OCI-LY7 (cell line): ENCODE measurements at regions of chr19 and their contacts with region 1.

Region 1: DNA sequence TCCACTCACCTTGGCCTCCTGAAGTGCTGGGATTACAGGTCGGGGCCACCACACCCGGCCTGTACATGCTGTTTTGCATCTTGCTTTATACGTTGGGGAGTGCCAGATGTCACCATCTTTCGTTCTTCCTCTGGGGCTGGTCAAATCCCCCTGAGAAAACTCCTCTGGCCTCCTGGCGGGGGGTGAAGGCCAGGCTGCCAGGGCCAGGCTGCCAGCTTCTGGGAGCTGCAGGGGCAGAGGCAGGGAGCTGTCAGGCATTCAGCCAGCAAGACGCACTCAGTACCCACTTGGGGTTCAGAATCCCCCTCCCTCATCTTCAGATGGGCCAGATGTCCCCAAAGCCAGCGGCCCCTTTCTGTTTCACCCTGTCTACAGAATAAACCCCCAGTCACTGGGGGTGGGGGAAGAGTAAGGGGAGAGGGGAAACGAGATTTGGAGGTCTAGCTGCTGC is 16.1 kb downstream of the ZSWIM9 start:
- DNase-seq: peak; percentile 93
- H3K4me3 ChIP-seq: peak overlapping the region; percentile 58
- H3K27ac ChIP-seq: peak overlapping the region; percentile 97
- H3K4me1 ChIP-seq: peaks cover 61% of the 10 kb centered on the region
- CTCF ChIP-seq: no peak

Region 2: GRCh38 chr19:48170038-48170812 is 16.3 kb before region 1 on chr19 and contains the starts of genes LIG1 and ZSWIM9:
- CTCF ChIA-PET with region 1: interaction called, 4 read pairs
- POLR2A ChIA-PET with region 1: interaction called, 3 read pairs
- intact Hi-C with region 1: loop called (anchors 1 kb)
- DNase-seq: peak; percentile 94
- H3K4me3 ChIP-seq: peak within 1 kb of the TSS; percentile 98
- H3K27ac ChIP-seq: peak within 1 kb of the TSS; percentile 85
- H3K4me1 ChIP-seq: peaks cover 30% of the 10 kb centered on the region
- CTCF ChIP-seq: no peak
- total RNA-seq, gene LIG1: 279 and 291 TPM in 2 replicates
- total RNA-seq, gene ZSWIM9: 3.2 and 4.5 TPM in 2 replicates

Region 3: DNA sequence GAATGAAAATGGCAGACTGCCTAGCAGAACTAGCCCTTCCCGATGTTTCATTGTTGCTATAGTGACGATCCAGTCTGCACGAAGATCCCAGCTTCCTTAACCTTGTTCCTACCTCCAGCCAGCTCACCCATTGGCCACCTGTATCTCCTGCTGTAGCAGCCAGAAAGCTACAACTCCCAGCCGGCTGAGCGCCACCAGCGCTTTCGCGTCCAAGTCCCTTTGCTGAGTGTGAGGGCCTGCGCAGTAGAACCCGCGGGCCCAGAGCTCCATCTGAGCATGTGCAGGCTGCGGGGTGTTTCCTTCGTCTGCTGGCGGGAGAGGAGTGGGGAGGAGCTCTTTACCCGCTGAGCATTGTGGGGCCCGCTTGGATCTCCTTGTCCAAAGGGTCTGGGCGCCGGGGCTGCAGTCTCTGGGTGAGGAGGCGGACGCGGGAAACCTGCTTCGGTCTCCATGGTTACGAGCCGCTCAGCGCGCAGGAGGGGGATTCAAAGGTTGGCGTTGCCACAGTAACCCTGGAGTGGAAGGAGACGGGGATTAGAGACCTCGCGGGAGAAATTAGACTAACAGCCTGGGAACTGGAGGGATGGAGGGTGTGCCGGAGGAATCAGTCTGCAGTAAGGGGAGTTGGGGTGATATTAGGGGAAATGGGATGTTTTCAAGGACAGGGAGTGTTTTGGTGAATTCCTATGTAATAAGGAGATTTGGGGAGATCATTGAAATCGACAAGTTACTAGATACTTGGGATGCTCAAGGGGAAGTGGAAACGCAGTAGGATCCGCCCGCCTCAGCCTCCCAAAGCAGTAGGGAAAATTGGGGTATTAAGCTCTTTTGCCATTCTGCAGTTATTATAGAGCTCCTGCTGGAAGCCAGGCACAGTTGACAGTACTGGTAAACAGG is 17.4 kb after region 1 on chr19:
- CTCF ChIA-PET with region 1: interaction called, 3 read pairs
- POLR2A ChIA-PET with region 1: interaction called, 24 read pairs
- intact Hi-C with region 1: no loop called
- DNase-seq: peak; percentile 95
- H3K4me3 ChIP-seq: peak overlapping the region; percentile 81
- H3K27ac ChIP-seq: peak overlapping the region; percentile 60
- H3K4me1 ChIP-seq: peaks cover 23% of the 10 kb centered on the region
- CTCF ChIP-seq: no peak